Cardiac septum (tissue), 1 donor: ENCODE measurements at regions of chr6 and their contacts with region 1.

Region 1: GRCh38 chr6:132483779-132484679 is 28.9 kb downstream of the STX7 start:
- DNase-seq: no peak

Region 2: DNA sequence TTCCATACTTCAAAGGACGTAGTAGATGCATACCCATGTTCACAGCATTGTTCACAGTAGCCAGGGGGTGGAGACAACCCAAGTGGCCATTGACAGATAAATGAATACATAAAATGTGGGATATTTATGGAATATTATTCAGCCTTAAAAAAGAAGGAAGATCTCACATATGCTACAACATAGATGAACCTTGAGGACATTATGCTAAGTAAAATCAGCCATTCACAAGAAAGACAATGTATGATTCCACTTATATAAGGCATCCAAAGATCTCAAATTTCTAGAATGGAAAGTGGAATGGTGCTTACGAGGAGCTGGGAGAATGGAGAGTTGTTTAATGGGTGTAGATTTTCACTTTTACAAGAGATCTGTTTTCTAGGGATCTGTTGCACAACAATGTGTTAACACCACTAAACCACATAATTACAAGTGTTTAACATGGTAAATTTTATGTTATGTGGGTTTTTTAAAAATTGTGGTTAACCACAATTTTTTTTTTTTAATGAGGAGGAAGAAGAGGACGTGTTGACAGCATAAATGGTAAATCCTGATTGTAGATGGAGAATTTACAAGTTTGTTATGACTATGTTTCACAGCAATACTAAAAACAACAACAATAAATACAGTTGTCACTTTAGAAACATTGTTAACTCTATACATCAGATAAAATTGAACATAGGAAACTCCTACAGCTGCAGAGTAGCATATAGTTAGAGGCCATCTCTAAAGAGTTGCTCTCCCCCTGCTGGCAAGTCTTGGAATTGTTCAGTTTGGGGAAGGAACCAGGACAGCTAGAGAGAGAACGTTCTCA is 574.4 kb before region 1 on chr6:
- intact Hi-C with region 1: loop called (anchors 10 kb)
- DNase-seq: no peak

Region 3: DNA sequence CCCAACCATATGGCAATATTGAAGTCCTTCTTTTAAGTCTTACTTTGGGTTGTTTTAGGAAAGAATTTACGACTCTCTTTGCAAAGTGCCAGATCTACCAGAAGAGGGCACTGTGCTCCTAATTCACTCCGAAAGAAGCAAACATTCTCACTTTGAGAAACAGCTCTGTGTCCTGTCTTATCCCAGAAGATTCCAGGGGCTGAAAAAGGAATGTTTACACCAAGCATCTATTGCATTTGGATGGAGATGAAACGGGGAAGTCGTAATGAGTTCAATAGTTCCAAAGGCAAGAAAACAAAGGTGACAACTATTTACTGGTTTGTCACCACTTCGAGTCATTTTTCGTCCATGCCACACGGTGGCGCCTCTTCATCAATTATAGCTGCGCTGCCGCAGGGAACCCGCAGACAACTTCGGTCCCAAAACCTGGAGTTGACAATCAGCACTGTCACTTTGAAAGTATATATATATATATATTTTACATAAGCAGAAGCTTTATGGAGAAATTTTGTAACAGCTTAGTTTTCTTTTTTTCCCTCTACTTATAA is 204.4 kb before region 1 on chr6:
- intact Hi-C with region 1: loop called (anchors 5 kb)
- DNase-seq: peak; percentile 82

Region 4: DNA sequence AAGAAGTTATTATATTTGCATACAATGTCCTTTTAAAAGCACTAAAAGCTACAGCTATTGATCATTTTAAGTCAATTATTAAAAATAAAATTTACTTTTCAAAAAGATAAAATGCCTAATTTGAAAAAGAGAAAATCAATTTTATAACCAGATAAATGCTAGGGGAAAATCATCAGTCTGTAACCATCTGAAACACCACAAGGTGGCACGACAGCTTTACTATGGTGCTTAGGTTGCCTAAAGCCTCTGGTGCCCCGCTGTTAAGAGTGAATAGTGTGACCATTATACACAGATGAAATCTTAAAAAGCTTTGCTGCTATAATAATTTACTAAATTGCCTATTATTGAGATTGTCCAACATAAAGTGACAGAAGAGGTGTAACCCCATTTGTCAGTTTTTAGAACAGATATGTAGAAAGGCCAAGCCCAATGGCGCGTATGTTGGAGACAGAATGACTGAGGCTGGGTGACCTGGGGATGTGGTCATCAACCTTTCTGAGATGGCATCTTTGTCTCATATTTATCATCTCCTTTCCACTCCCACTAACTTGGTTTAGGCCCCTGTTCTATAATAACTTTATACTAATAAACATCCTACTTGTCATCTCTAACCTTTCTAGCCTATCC is 183.6 kb before region 1 on chr6:
- intact Hi-C with region 1: loop called (anchors 5 kb)
- DNase-seq: no peak